Gastrocnemius medialis (tissue), 4 donors: ENCODE measurements at regions of chrX and their contacts with region 1.

Region 1: DNA sequence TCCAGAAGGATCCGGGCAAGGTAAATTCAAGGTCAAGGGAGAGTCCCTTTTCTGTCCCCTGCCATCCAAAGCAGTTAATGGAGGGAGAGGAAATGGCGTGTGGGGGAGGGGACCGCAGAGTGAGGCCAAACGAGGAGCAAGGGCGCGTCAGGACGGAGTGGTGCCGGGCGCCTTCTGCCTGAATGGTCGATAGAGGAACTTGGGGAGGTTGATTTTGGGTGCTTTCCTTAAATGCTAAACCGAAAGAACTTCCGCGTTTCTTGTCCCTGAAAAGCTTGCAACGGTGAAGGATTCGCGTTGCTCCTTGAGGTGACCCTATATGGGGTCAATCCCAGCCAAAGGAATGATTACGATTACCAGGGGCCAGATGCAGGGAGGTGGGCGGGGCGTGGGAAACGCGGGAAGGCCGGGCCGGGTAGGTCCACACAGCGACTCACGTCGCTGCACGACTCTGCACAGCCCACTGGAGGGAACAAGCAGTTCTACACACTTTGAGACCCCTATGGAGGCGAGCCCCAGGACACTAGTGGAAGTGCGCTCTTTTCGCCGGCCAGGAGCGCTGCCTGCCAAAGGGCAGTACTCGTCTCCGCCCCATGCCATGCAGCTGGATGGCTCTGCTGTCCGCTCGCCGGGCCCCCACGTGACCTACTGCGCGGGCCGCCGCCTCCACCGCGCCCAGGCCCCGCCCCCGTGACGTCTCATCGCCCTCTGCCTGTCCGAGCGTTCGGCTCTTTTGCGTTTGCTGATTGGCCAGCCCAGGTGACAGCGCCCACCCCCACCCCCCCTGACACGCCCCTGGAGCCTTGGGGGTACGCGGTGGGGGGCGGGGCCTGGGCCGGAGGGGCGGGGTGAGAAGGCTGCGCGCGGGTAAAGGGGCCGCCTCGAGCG is 452 bp upstream of the GK start:
- DNase-seq: peak; percentile 86 to 91
- ATAC-seq: peak; percentile 93 to 95
- H3K4me3 ChIP-seq: peak overlapping the region; percentile 58 to 71 (median 64)
- H3K27ac ChIP-seq: peak overlapping the region; percentile 71 to 78 (median 76)
- H3K4me1 ChIP-seq: no peaks in the 10 kb centered on the region
- H3K27me3 ChIP-seq: no peaks in the 10 kb centered on the region
- CTCF ChIP-seq: no peak
- POLR2A ChIP-seq: no peak

Region 2: GRCh38 chrX:30241724-30242415 is 410.9 kb before region 1 on chrX and contains the start of gene MAGEB4:
- in situ Hi-C with region 1: no loop called
- intact Hi-C with region 1: no loop called
- DNase-seq: no peak
- ATAC-seq: no peak
- H3K4me3 ChIP-seq: no peak within 1 kb of the TSS
- H3K27ac ChIP-seq: no peak within 1 kb of the TSS
- H3K4me1 ChIP-seq: no peaks in the 10 kb centered on the region
- H3K27me3 ChIP-seq: no peaks in the 10 kb centered on the region
- CTCF ChIP-seq: no peak
- POLR2A ChIP-seq: no peak
- total RNA-seq, gene MAGEB4: not detected

Region 3: DNA sequence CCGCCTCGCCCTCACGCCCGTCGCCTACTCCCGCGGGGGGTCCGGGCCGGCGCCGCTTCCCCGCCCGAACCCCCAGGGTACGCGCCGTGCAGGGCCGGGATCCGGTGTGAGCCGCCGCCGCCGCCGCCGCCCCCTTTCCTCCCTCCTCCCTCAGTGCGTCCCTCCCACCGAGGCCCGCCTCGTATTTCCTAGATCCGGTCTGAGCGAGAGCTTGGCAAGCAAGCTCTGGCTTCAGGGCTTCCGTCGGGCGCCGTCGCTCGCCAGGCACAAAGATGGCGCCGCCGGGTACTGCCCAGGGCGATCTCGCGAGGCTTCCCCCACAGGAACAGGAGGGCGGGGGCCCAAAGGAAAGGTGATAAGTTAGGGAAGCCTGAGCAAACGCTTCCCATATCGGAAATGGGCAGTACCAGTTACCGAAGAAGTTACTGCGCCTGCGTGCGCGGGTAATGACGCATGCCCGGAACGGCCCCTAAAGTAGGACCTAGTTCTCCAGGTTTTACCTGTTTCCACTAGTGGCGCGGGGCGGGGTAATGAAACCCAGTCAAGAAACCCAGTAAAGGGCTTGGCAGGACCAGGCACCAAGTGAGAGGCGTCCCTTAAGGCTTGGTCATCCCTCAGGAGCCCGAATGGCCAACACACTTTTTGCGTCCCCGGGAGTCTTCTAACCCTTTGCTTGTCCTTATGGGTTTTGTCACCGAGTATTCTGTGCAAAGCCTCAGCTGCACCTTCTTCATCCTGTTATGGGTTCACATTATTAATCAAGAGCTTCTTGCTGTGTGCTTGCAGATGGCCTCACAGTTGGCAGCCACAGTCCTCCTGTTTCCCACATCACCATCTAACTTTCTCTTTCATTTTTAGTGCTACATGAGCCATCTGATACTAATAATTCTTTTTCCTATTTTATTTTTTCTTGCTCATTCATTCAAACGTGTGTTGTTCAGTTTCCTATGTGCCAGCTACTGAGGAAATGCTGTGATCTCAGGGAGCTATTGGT is 236.7 kb after region 1 on chrX and contains the start of gene TAB3:
- in situ Hi-C with region 1: no loop called
- intact Hi-C with region 1: loop called (anchors 10 kb)
- DNase-seq: peak; percentile 87 to 94
- ATAC-seq: peak; percentile 95 to 96
- H3K4me3 ChIP-seq: peak within 1 kb of the TSS; percentile 62 to 78 (median 72)
- H3K27ac ChIP-seq: peak within 1 kb of the TSS; percentile 71 to 87 (median 84)
- H3K4me1 ChIP-seq: peaks cover 5 to 13% of the 10 kb centered on the region in 2 donors
- H3K27me3 ChIP-seq: no peaks in the 10 kb centered on the region
- CTCF ChIP-seq: no peak
- POLR2A ChIP-seq: peak; percentile 66 to 72
- total RNA-seq, gene TAB3: 9.7 to 25.8 (median 19.2) TPM